Mammary epithelial cell (primary cell): ENCODE measurements at regions of chr2 and their contacts with region 1.

Region 1: GRCh38 chr2:10659898-10660568 is 29.7 kb downstream of the NOL10 start:
- DNase-seq: peak; percentile 52
- H3K4me3 ChIP-seq: no peak overlapping the region
- H3K27ac ChIP-seq: no peak overlapping the region
- H3K4me1 ChIP-seq: peaks cover 30% of the 10 kb centered on the region
- H3K27me3 ChIP-seq: no peaks in the 10 kb centered on the region
- CTCF ChIP-seq: peak; percentile 76 to 78

Region 2: GRCh38 chr2:10122386-10123280 is 537.4 kb before region 1 on chr2 and contains the start of gene RRM2:
- CTCF ChIA-PET with region 1: no interaction called
- dilution Hi-C with region 1: loop called (anchors 10 kb)
- in situ Hi-C with region 1: loop called (anchors 25 kb)
- intact Hi-C with region 1: no loop called
- DNase-seq: peak; percentile 88
- H3K4me3 ChIP-seq: peak within 1 kb of the TSS; percentile 43 to 93 (median 88)
- H3K27ac ChIP-seq: peak within 1 kb of the TSS; percentile 75
- H3K4me1 ChIP-seq: peaks cover 35% of the 10 kb centered on the region
- H3K27me3 ChIP-seq: no peaks in the 10 kb centered on the region
- CTCF ChIP-seq: no peak
- total RNA-seq, gene RRM2: 4.0 to 103 TPM

Region 3: DNA sequence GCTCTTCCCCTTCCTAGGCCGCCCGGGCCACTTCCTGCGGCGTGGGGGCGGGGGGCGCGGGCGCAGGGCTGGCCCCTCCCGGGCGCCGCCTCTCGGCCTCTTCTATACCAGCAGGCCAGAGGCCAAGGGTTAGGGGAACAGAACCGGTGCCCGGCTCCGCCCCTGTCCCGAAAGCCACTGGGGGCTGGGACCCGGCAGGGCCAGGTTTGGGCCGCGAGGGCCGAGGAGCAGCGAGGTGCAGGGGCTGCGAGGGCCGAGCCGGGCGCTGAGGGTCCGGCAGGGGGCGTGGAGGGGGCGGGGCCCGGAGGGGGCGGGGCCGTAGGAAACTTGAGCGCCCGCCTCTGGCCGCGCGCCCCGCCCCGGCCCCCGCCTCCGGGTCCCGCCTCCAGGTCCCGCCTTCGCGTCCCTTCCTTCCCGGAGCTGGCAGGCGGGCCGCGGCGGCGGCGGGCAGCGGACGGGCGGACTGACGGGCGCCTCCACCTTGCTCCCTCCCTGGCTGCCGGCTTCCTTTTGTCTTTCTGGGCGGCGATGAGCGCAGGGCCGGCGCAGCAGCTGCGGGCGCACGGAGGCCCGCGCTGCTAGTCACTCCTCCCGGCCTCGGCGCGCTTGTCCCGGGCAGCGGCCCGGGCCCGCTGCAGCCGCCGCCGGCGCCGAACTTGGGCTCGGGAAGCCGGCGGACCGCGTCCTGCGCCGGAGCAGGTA is 357.4 kb before region 1 on chr2 and contains the start of gene HPCAL1:
- CTCF ChIA-PET with region 1: no interaction called
- dilution Hi-C with region 1: no loop called
- in situ Hi-C with region 1: no loop called
- intact Hi-C with region 1: loop called (anchors 10 kb)
- DNase-seq: peak; percentile 80
- H3K4me3 ChIP-seq: peak within 1 kb of the TSS; percentile 58 to 89 (median 87)
- H3K27ac ChIP-seq: no peak within 1 kb of the TSS
- H3K4me1 ChIP-seq: peaks cover 19% of the 10 kb centered on the region
- H3K27me3 ChIP-seq: no peaks in the 10 kb centered on the region
- CTCF ChIP-seq: peak; percentile 28 to 65
- total RNA-seq, gene HPCAL1: 26.3 to 82.8 TPM

Region 4: GRCh38 chr2:10493636-10494281 is 166.3 kb before region 1 on chr2:
- CTCF ChIA-PET with region 1: no interaction called
- dilution Hi-C with region 1: no loop called
- in situ Hi-C with region 1: no loop called
- intact Hi-C with region 1: loop called (anchors 2 kb)
- DNase-seq: peak; percentile 99
- H3K4me3 ChIP-seq: no peak overlapping the region
- H3K27ac ChIP-seq: peak overlapping the region; percentile 91
- H3K4me1 ChIP-seq: peaks cover 37% of the 10 kb centered on the region
- H3K27me3 ChIP-seq: no peaks in the 10 kb centered on the region
- CTCF ChIP-seq: no peak

Region 5: GRCh38 chr2:10584796-10585475 is 75.1 kb before region 1 on chr2:
- CTCF ChIA-PET with region 1: no interaction called
- dilution Hi-C with region 1: no loop called
- in situ Hi-C with region 1: no loop called
- intact Hi-C with region 1: loop called (anchors 5 kb)
- DNase-seq: peak; percentile 96
- H3K4me3 ChIP-seq: no peak overlapping the region
- H3K27ac ChIP-seq: peak overlapping the region; percentile 96
- H3K4me1 ChIP-seq: peaks cover 25% of the 10 kb centered on the region
- H3K27me3 ChIP-seq: no peaks in the 10 kb centered on the region
- CTCF ChIP-seq: no peak

Region 6: DNA sequence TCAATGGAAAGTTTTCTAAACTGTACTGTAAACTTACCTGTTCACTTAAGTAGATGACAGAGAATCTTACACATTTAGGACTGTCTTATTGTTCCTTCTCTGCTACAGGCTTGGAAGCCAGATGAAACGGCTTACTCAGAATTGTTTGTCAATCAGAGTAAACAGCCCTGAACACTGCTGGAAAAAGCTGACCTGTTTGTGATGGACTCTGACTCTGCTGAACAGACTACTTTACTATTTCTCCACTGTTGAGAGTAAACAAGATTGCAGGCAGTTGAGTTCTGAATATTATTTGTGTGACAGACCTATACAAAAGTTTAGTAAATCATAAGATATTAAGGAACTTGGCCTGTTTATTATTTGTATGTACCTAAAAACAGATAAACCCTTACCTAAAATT is 69.3 kb before region 1 on chr2:
- CTCF ChIA-PET with region 1: interaction called, 10 read pairs
- dilution Hi-C with region 1: no loop called
- in situ Hi-C with region 1: no loop called
- intact Hi-C with region 1: loop called (anchors 5 kb)
- DNase-seq: no peak
- H3K4me3 ChIP-seq: no peak overlapping the region
- H3K27ac ChIP-seq: no peak overlapping the region
- H3K4me1 ChIP-seq: peaks cover 1% of the 10 kb centered on the region
- H3K27me3 ChIP-seq: no peaks in the 10 kb centered on the region
- CTCF ChIP-seq: no peak

Region 7: DNA sequence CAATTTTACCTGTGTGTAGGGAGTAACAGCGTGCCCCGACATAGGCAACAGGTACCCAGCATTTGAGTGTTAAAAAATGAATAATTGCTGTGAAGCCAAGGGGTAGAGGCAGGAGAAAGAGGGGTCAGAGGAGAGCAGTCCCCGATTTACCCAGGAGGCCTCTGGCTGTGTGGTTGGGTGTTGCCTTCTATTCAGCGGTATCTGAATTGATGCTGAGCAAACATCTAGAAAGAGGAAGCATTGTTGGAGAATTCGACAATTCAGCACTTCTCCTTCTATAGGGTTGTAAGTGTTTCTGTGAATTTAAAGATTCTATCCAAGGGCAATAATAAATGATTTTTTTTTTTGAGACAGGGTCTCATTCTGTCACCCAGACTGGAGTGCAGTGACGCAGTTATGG is 161.3 kb after region 1 on chr2:
- CTCF ChIA-PET with region 1: no interaction called
- dilution Hi-C with region 1: no loop called
- in situ Hi-C with region 1: no loop called
- intact Hi-C with region 1: no loop called
- DNase-seq: no peak
- H3K4me3 ChIP-seq: no peak overlapping the region
- H3K27ac ChIP-seq: no peak overlapping the region
- H3K4me1 ChIP-seq: no peaks in the 10 kb centered on the region
- H3K27me3 ChIP-seq: peaks cover 2% of the 10 kb centered on the region
- CTCF ChIP-seq: no peak